ENCODE measurements at regions of chr5 and their contacts with region 1.

Region 1: DNA sequence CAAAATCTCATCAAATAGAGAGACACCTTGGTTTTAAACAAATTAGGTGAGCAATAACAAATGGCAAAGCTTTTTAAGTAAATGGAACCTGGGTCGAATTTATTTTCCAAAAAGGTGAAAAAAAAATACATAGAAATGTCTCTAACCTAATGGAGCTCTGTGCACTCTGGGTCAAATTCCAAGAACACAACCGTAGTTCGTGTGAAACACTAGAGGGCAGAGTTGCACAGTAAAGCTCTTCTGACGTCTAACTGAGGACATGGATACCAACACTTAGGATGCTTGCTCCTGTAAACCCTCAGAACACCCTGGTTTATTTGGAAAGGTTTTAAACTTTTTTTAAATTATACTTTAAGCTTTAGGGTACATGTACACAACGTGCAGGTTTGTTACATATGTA is 18.9 kb downstream of the MARCHF11 start:
- DNase-seq: no peak
- H3K4me3 ChIP-seq: no peak overlapping the region
- H3K27ac ChIP-seq: no peak overlapping the region
- H3K4me1 ChIP-seq: no peaks in the 10 kb centered on the region
- H3K27me3 ChIP-seq: no peaks in the 10 kb centered on the region
- CTCF ChIP-seq: peak; percentile 34 to 57 (median 51)
- EP300 ChIP-seq: no peak
- POLR2A ChIP-seq: no peak

Region 2: DNA sequence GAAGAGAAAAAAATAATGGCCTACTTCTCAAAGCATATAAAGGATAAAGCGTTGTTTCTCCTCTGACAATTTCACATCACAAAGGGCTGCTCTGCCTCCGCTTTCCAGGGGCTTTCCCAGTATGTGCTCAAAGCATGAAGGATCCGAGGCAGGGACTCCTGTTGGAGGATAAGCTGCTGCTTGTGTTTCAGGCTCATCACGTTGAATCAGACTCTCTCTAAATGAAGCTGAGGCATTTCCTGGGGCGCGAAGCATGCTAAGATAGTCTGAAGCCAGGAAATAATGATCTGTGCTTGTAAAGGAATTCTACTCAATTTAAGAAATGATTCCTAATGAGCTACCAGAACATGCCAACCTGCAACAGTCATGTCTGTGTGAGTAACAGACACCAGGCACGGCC is 78.7 kb before region 1 on chr5:
- in situ Hi-C with region 1: no loop called
- intact Hi-C with region 1: no loop called
- DNase-seq: no peak
- H3K4me3 ChIP-seq: no peak overlapping the region
- H3K27ac ChIP-seq: no peak overlapping the region
- H3K4me1 ChIP-seq: no peaks in the 10 kb centered on the region
- H3K27me3 ChIP-seq: no peaks in the 10 kb centered on the region
- CTCF ChIP-seq: no peak
- EP300 ChIP-seq: no peak
- POLR2A ChIP-seq: no peak

Region 3: GRCh38 chr5:16456103-16456832 is 295.6 kb after region 1 on chr5:
- in situ Hi-C with region 1: loop called in 2 of 4 experiments (anchors 10 kb)
- intact Hi-C with region 1: no loop called
- DNase-seq: peak; percentile 20
- H3K4me3 ChIP-seq: no peak overlapping the region
- H3K27ac ChIP-seq: peak overlapping the region in 1 of 4 donors; percentile 2
- H3K4me1 ChIP-seq: peaks cover 8 to 54% (median 14%) of the 10 kb centered on the region in 4 donors
- H3K27me3 ChIP-seq: no peaks in the 10 kb centered on the region
- CTCF ChIP-seq: peak; percentile 63 to 75 (median 70)
- EP300 ChIP-seq: no peak
- POLR2A ChIP-seq: no peak

Region 4: DNA sequence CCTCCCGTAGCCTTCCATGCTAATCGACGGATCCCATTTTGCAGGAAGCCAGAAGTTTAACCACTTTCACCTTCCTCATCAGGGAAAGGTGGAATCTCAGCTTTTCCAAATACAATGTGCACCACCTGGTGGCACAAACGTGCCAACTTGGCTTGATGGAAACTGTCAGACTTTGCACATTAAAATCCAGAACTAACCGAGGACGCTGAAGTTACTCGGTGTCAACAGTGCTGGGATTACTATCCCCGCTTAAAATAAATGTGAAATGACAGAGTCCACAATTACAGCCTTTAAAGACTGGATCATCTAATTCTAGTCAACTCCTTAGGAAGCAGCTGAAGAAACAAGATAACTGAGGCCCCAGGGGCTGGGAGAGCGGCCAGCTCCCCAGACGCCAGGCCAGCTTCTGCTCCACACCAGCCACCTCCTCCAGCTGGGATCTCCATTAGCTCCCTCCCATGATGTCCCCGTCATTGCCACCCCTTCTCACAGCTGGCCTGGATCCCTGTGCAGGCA is 506.2 kb after region 1 on chr5:
- in situ Hi-C with region 1: loop called in 1 of 4 experiments (anchors 25 kb)
- intact Hi-C with region 1: no loop called
- DNase-seq: peak; percentile 63
- H3K4me3 ChIP-seq: no peak overlapping the region
- H3K27ac ChIP-seq: peak overlapping the region in 2 of 4 donors; percentile 39 to 41
- H3K4me1 ChIP-seq: peaks cover 0 to 15% (median 6%) of the 10 kb centered on the region in 4 donors
- H3K27me3 ChIP-seq: no peaks in the 10 kb centered on the region
- CTCF ChIP-seq: peak; percentile 42 to 69 (median 50)
- EP300 ChIP-seq: no peak
- POLR2A ChIP-seq: no peak